Esophagus squamous epithelium (tissue), 5 donors: ENCODE measurements at regions of chr21 and their contacts with region 1.

Region 1: GRCh38 chr21:40143822-40144525 is 276.7 kb downstream of the PCP4 start:
- DNase-seq: no peak
- H3K4me3 ChIP-seq: no peak overlapping the region
- H3K27ac ChIP-seq: no peak overlapping the region
- H3K4me1 ChIP-seq: no peaks in the 10 kb centered on the region
- H3K27me3 ChIP-seq: no peaks in the 10 kb centered on the region
- CTCF ChIP-seq: peak; percentile 55 to 87 (median 73)
- POLR2A ChIP-seq: no peak

Region 2: GRCh38 chr21:40381111-40381510 is 237.1 kb after region 1 on chr21:
- intact Hi-C with region 1: loop called (anchors 5 kb)
- DNase-seq: no peak
- H3K4me3 ChIP-seq: no peak overlapping the region
- H3K27ac ChIP-seq: no peak overlapping the region
- H3K4me1 ChIP-seq: no peaks in the 10 kb centered on the region
- H3K27me3 ChIP-seq: no peaks in the 10 kb centered on the region
- CTCF ChIP-seq: no peak
- POLR2A ChIP-seq: no peak